ENCODE measurements at regions of chr17 and their contacts with region 1.

Region 1: DNA sequence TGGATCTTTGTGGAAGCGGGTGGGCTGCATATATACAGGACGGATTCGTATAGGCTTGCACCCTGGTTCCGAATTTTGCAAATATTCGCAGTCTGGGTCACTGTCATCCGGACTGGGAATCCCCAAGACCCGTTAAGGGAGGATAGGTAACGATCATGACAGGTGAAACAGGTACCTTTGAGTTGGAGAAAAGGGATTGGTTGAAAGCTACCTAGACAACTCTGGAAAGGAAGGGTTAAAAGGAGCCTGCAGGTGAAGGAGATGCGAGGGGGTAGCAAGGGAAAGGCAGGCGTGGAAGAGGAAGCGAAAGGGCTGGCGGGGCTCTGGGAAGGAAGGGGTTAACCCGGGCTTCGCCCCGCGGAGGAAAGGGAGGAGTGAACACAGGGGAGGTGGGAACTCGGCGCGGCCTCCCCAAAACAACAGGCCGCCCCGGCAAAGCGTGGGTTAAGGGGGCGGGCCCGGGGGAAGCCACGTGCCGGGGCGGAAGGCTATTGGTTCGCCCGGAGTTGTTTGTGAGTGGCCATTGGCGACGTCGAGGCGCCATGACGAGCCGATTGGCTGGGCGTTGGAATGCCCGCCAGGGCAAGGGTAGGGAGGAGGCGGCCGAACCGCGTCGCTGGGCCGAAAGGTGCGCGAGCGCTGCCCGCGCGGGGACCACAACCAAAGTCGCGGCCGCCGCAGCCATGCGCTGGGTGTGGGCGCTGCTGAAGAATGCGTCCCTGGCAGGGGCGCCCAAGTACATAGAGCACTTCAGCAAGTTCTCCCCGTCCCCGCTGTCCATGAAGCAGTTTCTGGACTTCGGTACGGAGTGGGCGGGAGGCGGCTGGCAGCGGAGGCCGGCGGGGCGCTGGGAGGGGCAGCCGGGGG is at the start of gene PDK2:
- DNase-seq: peak; percentile 96
- H3K4me3 Mint-ChIP-seq: peak within 1 kb of the TSS; percentile 92
- H3K27ac Mint-ChIP-seq: peak within 1 kb of the TSS; percentile 82
- H3K4me1 Mint-ChIP-seq: peaks cover 24% of the 10 kb centered on the region
- H3K27me3 Mint-ChIP-seq: no peaks in the 10 kb centered on the region
- CTCF ChIP-seq: no peak
- total RNA-seq, gene PDK2: 9.9 and 11.2 TPM in 2 replicates

Region 2: GRCh38 chr17:50026901-50027630 is 67.9 kb before region 1 on chr17:
- CTCF ChIA-PET with region 1: interaction called, 54 read pairs
- POLR2A ChIA-PET with region 1: interaction called, 30 read pairs
- intact Hi-C with region 1: loop called (anchors 2 kb)
- DNase-seq: peak; percentile 89
- H3K4me3 Mint-ChIP-seq: peak overlapping the region; percentile 82
- H3K27ac Mint-ChIP-seq: peak overlapping the region; percentile 84
- H3K4me1 Mint-ChIP-seq: peaks cover 22% of the 10 kb centered on the region
- H3K27me3 Mint-ChIP-seq: no peaks in the 10 kb centered on the region
- CTCF ChIP-seq: peak; percentile 91

Region 3: DNA sequence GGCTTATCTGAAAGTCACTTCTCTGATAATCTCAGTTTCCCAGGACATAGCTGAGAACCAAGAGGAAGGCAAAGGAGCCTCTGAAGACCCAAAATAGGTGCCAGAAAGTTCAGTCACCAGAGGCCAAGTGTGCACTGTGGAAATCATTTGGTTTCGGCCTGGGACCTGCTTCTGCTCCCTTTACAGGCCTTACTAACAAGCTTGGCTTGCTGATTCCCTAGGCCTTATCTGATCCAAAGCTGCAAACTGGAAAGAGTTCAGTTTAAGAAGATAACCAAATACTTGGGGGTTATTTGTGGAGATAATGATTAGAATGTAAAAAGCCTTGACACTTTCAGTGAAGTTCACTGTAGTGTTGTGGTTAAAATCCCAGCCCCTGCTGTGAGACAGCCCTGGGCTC is 22.1 kb before region 1 on chr17:
- CTCF ChIA-PET with region 1: interaction called, 79 read pairs
- POLR2A ChIA-PET with region 1: interaction called, 7 read pairs
- intact Hi-C with region 1: no loop called
- DNase-seq: no peak
- H3K4me3 Mint-ChIP-seq: no peak overlapping the region
- H3K27ac Mint-ChIP-seq: no peak overlapping the region
- H3K4me1 Mint-ChIP-seq: no peaks in the 10 kb centered on the region
- H3K27me3 Mint-ChIP-seq: no peaks in the 10 kb centered on the region
- CTCF ChIP-seq: no peak

Region 4: GRCh38 chr17:50114849-50115357 is 19.9 kb after region 1 on chr17:
- CTCF ChIA-PET with region 1: interaction called, 44 read pairs
- POLR2A ChIA-PET with region 1: interaction called, 3 read pairs
- intact Hi-C with region 1: no loop called
- DNase-seq: peak; percentile 68
- H3K4me3 Mint-ChIP-seq: no peak overlapping the region
- H3K27ac Mint-ChIP-seq: no peak overlapping the region
- H3K4me1 Mint-ChIP-seq: no peaks in the 10 kb centered on the region
- H3K27me3 Mint-ChIP-seq: peaks cover 22% of the 10 kb centered on the region
- CTCF ChIP-seq: peak; percentile 46

Region 5: DNA sequence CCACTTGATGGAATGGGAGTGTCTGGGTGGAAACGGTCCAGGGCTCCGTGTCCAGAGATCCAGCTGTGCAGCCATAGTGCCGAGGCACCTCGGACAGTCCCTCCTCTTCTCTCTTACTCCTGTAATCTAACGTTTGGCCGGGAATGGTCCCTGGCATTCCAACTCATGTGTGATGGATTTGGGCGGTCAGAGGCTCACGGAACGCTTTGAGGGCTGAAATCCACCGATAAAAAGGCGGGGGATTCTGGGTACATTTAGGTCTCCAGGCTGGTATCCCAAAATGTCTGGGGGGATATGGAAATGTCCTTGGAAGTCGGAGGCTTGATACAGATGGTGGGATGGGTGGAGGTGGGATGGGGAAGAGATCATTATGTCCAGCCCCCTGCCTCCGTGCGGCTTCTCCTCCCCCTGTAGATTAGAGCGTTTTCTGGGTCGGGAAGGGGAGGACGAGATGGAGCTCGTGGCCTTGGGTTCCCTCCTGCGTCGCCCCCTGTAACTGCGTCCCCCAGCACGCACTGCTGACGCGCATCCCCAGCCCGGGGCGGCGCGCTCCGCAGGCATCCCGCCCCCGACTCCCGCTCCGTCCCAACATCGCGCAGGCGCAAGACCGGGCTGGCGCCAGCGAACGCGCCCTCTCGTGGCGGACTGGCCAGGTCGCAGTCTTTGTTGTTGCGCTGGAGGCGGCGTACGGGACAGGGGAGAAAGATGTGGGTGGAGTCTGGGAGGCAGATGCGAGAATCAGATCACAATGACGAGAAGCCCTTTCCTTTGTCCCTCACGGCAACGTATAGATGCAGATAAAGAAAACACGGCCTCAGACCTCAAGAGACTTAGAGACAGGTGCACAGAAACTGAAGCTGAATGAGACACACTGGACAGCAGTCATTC is 66.3 kb after region 1 on chr17:
- CTCF ChIA-PET with region 1: interaction called, 32 read pairs
- POLR2A ChIA-PET with region 1: interaction called, 5 read pairs
- intact Hi-C with region 1: loop called (anchors 1 kb)
- DNase-seq: peak; percentile 89
- H3K4me3 Mint-ChIP-seq: peak overlapping the region; percentile 71
- H3K27ac Mint-ChIP-seq: no peak overlapping the region
- H3K4me1 Mint-ChIP-seq: peaks cover 11% of the 10 kb centered on the region
- H3K27me3 Mint-ChIP-seq: no peaks in the 10 kb centered on the region
- CTCF ChIP-seq: peak; percentile 84